ENCODE measurements at regions of chr10 and their contacts with region 1.

Region 1: DNA sequence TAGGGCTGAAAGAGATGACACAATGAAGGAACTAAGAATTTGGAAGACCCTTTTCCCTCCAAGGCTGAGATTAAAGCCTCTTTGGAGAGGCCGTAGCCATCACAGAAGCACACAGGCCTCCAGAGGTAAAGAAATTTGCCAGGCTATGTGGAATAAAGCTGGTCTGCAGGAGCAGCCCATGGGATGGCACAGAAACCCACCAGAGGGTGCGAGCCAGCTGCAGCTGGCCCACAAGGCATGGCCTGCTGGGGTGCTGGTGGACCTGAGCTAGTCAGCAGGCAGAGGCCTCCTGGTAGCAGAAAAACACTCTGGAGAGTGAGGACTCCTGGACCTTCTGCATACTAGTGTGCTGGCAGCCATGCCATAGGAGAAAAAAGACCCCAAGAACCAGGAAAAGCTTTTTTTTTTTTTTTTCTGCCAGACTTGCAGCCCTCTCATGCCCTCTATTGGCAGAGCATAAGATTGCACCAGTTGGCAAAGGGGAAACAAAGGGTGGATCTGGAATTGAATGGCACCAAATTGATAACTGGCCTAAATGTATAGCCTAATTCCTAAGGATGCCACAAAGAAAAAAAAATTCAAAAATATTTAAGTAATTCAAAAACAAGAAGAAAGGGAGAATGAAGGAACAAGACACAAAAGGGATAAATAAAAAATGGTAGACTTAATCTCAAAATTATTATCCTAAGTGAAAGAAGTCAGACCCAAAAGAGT is 112.6 kb upstream of the GHITM start:
- DNase-seq: peak in 1 of 2 experiments; percentile 41
- H3K4me3 ChIP-seq: no peak overlapping the region
- H3K4me3 Mint-ChIP-seq: no peak overlapping the region
- H3K27ac Mint-ChIP-seq: no peak overlapping the region
- H3K4me1 ChIP-seq: no peaks in the 10 kb centered on the region
- H3K4me1 Mint-ChIP-seq: no peaks in the 10 kb centered on the region
- H3K27me3 ChIP-seq: no peaks in the 10 kb centered on the region
- H3K27me3 Mint-ChIP-seq: no peaks in the 10 kb centered on the region
- CTCF ChIP-seq: peak; percentile 68 to 86

Region 2: DNA sequence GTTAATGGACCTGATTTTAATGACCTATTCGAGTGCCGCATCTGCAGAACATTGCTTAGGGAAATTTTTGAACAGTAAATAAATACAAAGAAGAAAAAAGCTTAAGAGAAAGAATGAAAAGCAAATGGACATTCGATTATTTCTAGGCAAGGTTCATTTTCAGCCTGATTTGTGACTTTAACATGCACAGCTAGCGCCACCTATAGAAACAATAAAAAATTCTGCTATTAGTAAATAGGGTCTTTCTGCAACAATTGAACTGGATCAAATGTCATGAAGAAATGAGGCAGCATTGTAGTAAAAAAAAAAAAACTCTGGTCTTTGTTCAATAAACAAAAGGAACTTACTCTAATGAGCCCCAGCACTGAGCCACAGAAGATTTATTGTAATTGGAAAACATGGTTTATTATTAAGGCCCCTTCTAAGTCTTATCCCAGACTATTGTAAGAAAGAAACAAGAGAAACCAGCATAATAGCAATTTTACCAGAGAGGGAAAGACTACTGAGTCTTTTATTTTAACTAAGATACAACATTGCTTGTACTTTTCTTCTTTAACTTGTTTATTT is 71.2 kb after region 1 on chr10:
- CTCF ChIA-PET with region 1: no interaction called
- POLR2A ChIA-PET with region 1: no interaction called
- intact Hi-C with region 1: loop called (anchors 2 kb)
- DNase-seq: no peak
- H3K4me3 ChIP-seq: no peak overlapping the region
- H3K4me3 Mint-ChIP-seq: no peak overlapping the region
- H3K27ac Mint-ChIP-seq: no peak overlapping the region
- H3K4me1 ChIP-seq: no peaks in the 10 kb centered on the region
- H3K4me1 Mint-ChIP-seq: no peaks in the 10 kb centered on the region
- H3K27me3 ChIP-seq: no peaks in the 10 kb centered on the region
- H3K27me3 Mint-ChIP-seq: peaks cover 11% of the 10 kb centered on the region
- CTCF ChIP-seq: peak; percentile 47 to 70

Measured in Caco-2 (cell line).